Activated CD4-positive, alpha-beta T cell treated with anti-CD3 and anti-CD28 coated beads for 36 hours (primary cell): ENCODE measurements at regions of chr9 and their contacts with region 1.

Region 1: DNA sequence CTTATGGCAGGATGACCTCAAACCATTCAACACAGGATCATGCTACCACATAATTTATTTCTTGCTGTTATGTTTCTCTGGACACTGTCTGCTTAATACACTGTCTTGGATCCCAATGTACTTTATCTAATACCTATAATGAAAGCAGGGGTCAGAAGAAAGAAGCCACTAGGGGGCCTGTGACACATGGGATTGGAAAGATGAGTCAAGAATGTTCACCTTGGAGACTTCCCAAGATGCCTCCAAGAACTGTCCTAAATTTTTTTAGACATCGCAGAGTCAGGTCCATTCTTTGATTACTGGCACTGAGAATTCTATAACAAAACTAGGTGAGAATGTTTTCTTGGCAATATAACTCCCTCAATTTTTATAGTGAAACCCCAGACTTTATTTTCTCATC is 305.8 kb upstream of the SMARCA2 start:
- DNase-seq: peak; percentile 10
- ATAC-seq: no peak
- H3K4me3 Mint-ChIP-seq: no peak overlapping the region
- H3K27ac Mint-ChIP-seq: no peak overlapping the region
- H3K4me1 Mint-ChIP-seq: no peaks in the 10 kb centered on the region
- H3K27me3 Mint-ChIP-seq: peaks cover 12% of the 10 kb centered on the region

Region 2: GRCh38 chr9:1939926-1940368 is 230.6 kb after region 1 on chr9:
- CTCF ChIA-PET with region 1: no interaction called
- POLR2A ChIA-PET with region 1: no interaction called
- intact Hi-C with region 1: loop called in 1 of 2 experiments (anchors 2 kb)
- DNase-seq: peak; percentile 62
- ATAC-seq: peak; percentile 83
- H3K4me3 Mint-ChIP-seq: no peak overlapping the region
- H3K27ac Mint-ChIP-seq: no peak overlapping the region
- H3K4me1 Mint-ChIP-seq: no peaks in the 10 kb centered on the region
- H3K27me3 Mint-ChIP-seq: peaks cover 7% of the 10 kb centered on the region

Region 3: GRCh38 chr9:2093920-2094597 is 384.7 kb after region 1 on chr9:
- CTCF ChIA-PET with region 1: no interaction called
- POLR2A ChIA-PET with region 1: no interaction called
- intact Hi-C with region 1: loop called in 1 of 2 experiments (anchors 5 kb)
- DNase-seq: no peak
- ATAC-seq: no peak
- H3K4me3 Mint-ChIP-seq: no peak overlapping the region
- H3K27ac Mint-ChIP-seq: peak overlapping the region; percentile 43
- H3K4me1 Mint-ChIP-seq: peaks cover 3% of the 10 kb centered on the region
- H3K27me3 Mint-ChIP-seq: no peaks in the 10 kb centered on the region